Activated CD4-positive, alpha-beta memory T cell treated with anti-CD3 and anti-CD28 coated beads for 36 hours (primary cell): ENCODE measurements at regions of chr7 and their contacts with region 1.

Region 1: DNA sequence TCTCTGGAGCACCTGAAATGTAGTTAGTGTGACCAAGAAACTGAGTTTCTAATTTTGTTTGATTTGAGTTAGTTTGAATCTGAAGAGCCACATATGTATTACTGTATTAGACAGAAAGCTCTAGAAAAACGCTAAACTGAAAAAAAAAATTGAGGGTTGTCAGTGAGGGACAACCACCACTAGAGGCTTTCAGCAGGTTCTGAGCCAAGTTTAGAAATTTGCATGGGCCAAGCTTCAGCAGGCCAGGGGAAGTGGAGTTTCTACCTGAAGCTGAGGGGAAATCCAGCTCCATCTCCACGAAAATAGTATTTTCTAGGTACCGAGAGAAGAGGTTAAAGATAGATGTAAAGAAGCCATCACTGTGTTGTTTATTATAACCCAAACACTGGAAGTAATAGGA is 77.9 kb upstream of the PLXNA4 start:
- DNase-seq: peak; percentile 38
- H3K4me3 Mint-ChIP-seq: no peak overlapping the region
- H3K27ac Mint-ChIP-seq: peak overlapping the region; percentile 55
- H3K4me1 Mint-ChIP-seq: peaks cover 45% of the 10 kb centered on the region
- H3K27me3 Mint-ChIP-seq: no peaks in the 10 kb centered on the region

Region 2: DNA sequence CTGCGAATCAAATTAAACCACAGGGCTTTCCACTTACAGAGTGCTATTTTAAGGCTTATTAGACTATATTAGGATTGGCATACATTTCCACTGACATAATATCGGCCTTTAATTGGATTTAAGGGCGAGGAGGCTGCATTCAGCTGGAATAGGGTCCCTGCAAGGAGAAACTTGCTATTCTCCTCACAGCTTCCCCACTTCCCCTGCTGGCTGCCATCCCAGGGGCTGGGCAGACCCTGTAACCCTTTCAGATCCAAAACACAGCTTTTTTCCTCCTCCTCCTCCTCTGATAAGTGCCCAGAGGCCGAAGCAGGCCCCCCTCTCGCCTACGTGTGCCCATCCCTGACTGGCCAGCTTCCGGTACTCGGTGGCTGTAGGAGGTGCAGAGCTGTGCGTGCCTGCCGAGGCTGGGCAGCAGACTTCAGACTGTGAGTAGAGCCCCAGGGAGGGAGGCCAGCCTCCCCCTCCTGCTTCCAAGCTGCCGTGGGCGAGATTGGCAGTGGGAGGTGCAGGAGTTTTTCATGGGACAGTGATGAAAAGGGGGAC is 302.1 kb before region 1 on chr7:
- CTCF ChIA-PET with region 1: no interaction called
- POLR2A ChIA-PET with region 1: no interaction called
- intact Hi-C with region 1: no loop called
- DNase-seq: no peak
- H3K4me3 Mint-ChIP-seq: no peak overlapping the region
- H3K27ac Mint-ChIP-seq: no peak overlapping the region
- H3K4me1 Mint-ChIP-seq: no peaks in the 10 kb centered on the region
- H3K27me3 Mint-ChIP-seq: peaks cover 25% of the 10 kb centered on the region

Region 3: GRCh38 chr7:132666071-132666774 is 12.1 kb after region 1 on chr7:
- CTCF ChIA-PET with region 1: interaction called, 8 read pairs
- POLR2A ChIA-PET with region 1: interaction called, 6 read pairs
- intact Hi-C with region 1: loop called (anchors 1 kb)
- DNase-seq: peak; percentile 30
- H3K4me3 Mint-ChIP-seq: no peak overlapping the region
- H3K27ac Mint-ChIP-seq: peak overlapping the region; percentile 3
- H3K4me1 Mint-ChIP-seq: peaks cover 12% of the 10 kb centered on the region
- H3K27me3 Mint-ChIP-seq: no peaks in the 10 kb centered on the region

Region 4: GRCh38 chr7:132882714-132883428 is 228.7 kb after region 1 on chr7:
- CTCF ChIA-PET with region 1: no interaction called
- POLR2A ChIA-PET with region 1: no interaction called
- intact Hi-C with region 1: loop called (anchors 2 kb)
- DNase-seq: peak; percentile 55
- H3K4me3 Mint-ChIP-seq: no peak overlapping the region
- H3K27ac Mint-ChIP-seq: no peak overlapping the region
- H3K4me1 Mint-ChIP-seq: peaks cover 26% of the 10 kb centered on the region
- H3K27me3 Mint-ChIP-seq: no peaks in the 10 kb centered on the region

Region 5: GRCh38 chr7:133081599-133082389 is 427.6 kb after region 1 on chr7 and contains the start of gene CHCHD3:
- CTCF ChIA-PET with region 1: no interaction called
- POLR2A ChIA-PET with region 1: no interaction called
- intact Hi-C with region 1: loop called (anchors 5 kb)
- DNase-seq: peak; percentile 98
- H3K4me3 Mint-ChIP-seq: peak within 1 kb of the TSS; percentile 88
- H3K27ac Mint-ChIP-seq: peak within 1 kb of the TSS; percentile 87
- H3K4me1 Mint-ChIP-seq: peaks cover 23% of the 10 kb centered on the region
- H3K27me3 Mint-ChIP-seq: no peaks in the 10 kb centered on the region
- total RNA-seq, gene CHCHD3: 49.6 to 51.0 TPM

Region 6: GRCh38 chr7:134316539-134317344 is 1662.6 kb after region 1 on chr7 and contains the start of gene SLC35B4:
- CTCF ChIA-PET with region 1: interaction called, 3 read pairs
- POLR2A ChIA-PET with region 1: no interaction called
- intact Hi-C with region 1: loop called (anchors 5 kb)
- DNase-seq: peak; percentile 97
- H3K4me3 Mint-ChIP-seq: peak within 1 kb of the TSS; percentile 90
- H3K27ac Mint-ChIP-seq: peak within 1 kb of the TSS; percentile 72
- H3K4me1 Mint-ChIP-seq: peaks cover 19% of the 10 kb centered on the region
- H3K27me3 Mint-ChIP-seq: no peaks in the 10 kb centered on the region
- total RNA-seq, gene SLC35B4: 10.9 to 14.5 TPM